HAP-1 (cell line): ENCODE measurements at regions of chr2 and their contacts with region 1.

Region 1: DNA sequence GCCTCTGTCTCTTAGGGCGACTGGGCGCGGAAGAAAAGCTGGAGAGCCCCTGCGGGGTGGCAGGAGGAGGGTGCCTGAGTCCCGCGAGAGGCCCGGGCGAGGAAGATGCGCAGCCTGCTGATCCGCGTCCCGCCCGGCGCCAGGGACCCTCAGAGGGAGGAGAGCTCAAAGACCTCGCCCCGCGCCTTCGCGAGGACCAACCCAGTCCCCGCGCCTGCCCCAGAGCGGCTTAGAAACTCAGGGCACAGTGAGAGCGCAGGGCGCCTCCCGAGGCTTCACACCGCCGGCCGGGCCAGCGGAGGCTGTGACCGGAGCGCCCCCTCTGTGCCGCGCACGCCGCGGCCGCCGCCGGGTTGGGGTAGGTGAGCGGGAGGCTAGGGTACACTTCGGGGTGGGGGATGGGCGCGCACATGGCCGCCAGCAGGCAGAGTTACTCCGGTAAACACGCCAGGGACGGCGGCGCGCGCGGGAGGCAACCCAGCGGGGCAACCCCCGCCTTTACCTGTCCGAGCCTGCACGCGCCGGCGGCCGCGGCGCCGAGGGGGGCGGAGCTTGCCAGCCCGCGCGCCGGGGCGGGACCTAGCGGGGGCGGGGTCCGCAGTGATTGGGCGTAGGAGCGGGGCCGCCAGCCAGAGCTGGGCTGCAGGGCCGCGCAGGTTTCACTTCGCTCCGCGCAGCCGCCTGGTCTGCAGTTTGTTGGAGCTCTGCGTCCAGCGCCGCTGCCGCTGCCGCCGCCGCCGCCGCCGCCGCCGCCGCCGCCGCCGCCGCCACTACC is at the start of gene BCL2L11:
- DNase-seq: peak; percentile 84 to 93
- H3K4me3 ChIP-seq: peak within 1 kb of the TSS; percentile 87
- H3K4me1 ChIP-seq: peaks cover 7% of the 10 kb centered on the region; the same call in 1 of the 2 replicates
- H3K27me3 ChIP-seq: peaks cover 15% of the 10 kb centered on the region

Region 2: GRCh38 chr2:111017034-111017622 is 103.3 kb before region 1 on chr2:
- in situ Hi-C with region 1: no loop called
- DNase-seq: no peak
- H3K4me3 ChIP-seq: no peak overlapping the region
- H3K4me1 ChIP-seq: no peaks in the 10 kb centered on the region
- H3K27me3 ChIP-seq: no peaks in the 10 kb centered on the region

Region 3: DNA sequence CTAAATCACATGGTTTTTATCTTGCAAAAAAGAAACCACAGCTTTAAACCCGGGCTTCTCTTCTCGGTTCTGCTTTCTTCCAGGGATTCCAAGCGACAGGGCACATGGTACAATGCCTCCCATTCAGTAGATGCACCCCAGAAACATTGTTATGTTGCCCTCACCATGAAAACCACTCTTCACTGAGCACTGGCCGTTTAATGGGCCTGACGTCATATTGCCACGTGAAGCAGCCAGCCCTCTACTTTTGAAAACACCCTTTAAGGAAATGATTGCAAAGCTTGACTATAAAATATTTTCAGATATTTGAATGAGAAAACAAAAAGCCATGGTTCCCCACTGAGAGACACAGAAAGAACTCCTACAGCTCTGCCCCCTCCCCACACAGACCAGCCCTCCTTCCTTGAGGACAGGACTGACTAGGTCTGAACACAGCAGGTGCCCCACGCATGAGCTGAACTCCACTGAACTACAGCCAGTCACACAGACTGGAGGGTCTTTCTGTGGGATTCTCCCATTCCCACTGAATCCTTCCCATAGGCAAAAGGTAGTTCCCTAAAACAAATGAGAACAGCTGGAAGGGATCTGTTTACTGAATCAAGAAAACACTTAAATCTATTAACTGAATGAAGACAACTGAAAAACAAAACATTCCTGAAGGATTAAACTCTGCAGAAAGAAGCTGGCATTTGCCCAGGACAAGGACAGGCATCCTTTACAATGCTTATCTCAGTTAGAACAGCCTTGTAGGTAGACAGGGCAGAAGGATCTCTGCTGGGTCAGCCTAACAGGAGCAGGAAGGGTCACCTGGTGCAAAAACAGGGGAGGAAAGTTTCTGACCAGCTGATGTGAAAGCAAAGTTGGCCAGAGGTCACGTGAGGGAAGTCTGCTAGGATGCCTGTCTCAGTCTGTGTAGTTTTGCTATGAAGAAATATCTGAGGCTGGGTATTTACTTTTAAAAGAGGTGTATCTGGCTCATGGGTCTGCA is 414.7 kb after region 1 on chr2:
- in situ Hi-C with region 1: no loop called
- DNase-seq: no peak
- H3K4me3 ChIP-seq: no peak overlapping the region
- H3K4me1 ChIP-seq: no peaks in the 10 kb centered on the region
- H3K27me3 ChIP-seq: no peaks in the 10 kb centered on the region

Region 4: GRCh38 chr2:111705711-111706336 is 585.4 kb after region 1 on chr2:
- in situ Hi-C with region 1: loop called (anchors 10 kb)
- DNase-seq: peak in 1 of 2 experiments; percentile 40
- H3K4me3 ChIP-seq: no peak overlapping the region
- H3K4me1 ChIP-seq: no peaks in the 10 kb centered on the region
- H3K27me3 ChIP-seq: no peaks in the 10 kb centered on the region